Naive thymus-derived CD4-positive, alpha-beta T cell (primary cell): ENCODE measurements at regions of chr1 and their contacts with region 1.

Region 1: GRCh38 chr1:168360151-168361021 is 79.7 kb downstream of the TBX19 start:
- DNase-seq: peak in 1 of 9 donors; percentile 51
- ATAC-seq: no peak
- H3K4me3 ChIP-seq: no peak overlapping the region
- H3K4me3 Mint-ChIP-seq: peak overlapping the region in 1 of 10 donors; percentile 49
- H3K27ac ChIP-seq: no peak overlapping the region
- H3K27ac Mint-ChIP-seq: peak overlapping the region in 2 of 9 donors; percentile 35 to 70
- H3K4me1 ChIP-seq: peaks cover 4 to 37% of the 10 kb centered on the region in 2 donors
- H3K4me1 Mint-ChIP-seq: peaks cover 8 to 45% (median 10%) of the 10 kb centered on the region in 7 donors
- H3K27me3 ChIP-seq: no peaks in the 10 kb centered on the region
- H3K27me3 Mint-ChIP-seq: peaks cover 0 to 12% (median 5%) of the 10 kb centered on the region in 5 donors

Region 2: GRCh38 chr1:168396940-168397698 is 36.7 kb after region 1 on chr1:
- CTCF ChIA-PET with region 1: no interaction called
- POLR2A ChIA-PET with region 1: no interaction called
- intact Hi-C with region 1: no loop called
- DNase-seq: no peak
- ATAC-seq: no peak
- H3K4me3 ChIP-seq: no peak overlapping the region
- H3K4me3 Mint-ChIP-seq: no peak overlapping the region
- H3K27ac ChIP-seq: no peak overlapping the region
- H3K27ac Mint-ChIP-seq: no peak overlapping the region
- H3K4me1 ChIP-seq: peaks cover 0 to 11% of the 10 kb centered on the region in 2 donors
- H3K4me1 Mint-ChIP-seq: peaks cover 0 to 28% (median 0%) of the 10 kb centered on the region in 7 donors
- H3K27me3 ChIP-seq: no peaks in the 10 kb centered on the region
- H3K27me3 Mint-ChIP-seq: peaks cover 5 to 32% (median 10%) of the 10 kb centered on the region in 5 donors

Region 3: DNA sequence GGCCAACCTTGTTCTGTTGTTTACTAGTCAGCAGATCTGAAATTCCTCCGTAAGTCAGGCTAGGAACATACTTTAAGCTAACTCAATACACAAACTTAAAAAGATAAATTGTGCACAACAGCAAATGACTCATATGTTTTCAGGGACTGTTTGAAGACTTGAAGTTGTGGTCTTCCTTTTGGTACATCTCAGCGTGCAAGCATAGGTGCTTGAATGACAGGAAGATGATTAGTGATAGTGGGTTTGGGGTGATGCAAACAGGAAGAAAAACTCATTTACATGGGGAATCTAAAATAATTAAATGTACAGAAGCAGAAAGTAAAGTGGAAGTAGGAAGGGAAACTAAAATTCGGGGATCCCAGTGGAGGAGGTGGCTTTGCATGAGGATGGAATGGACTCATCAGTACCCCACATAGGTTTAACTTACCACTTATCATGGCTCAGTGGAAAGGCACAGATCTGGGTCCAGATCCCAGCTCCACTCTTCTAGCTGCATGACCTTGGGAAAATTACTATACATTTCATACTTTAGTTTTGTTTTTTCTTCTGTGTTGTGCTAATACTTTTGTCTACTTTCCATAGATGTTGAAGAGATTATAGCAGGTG is 61.1 kb after region 1 on chr1:
- CTCF ChIA-PET with region 1: no interaction called
- POLR2A ChIA-PET with region 1: no interaction called
- intact Hi-C with region 1: loop called in 1 of 2 experiments (anchors 5 kb)
- DNase-seq: no peak
- ATAC-seq: peak; percentile 81
- H3K4me3 ChIP-seq: no peak overlapping the region
- H3K4me3 Mint-ChIP-seq: peak overlapping the region in 2 of 10 donors; percentile 48 to 54
- H3K27ac ChIP-seq: no peak overlapping the region
- H3K27ac Mint-ChIP-seq: peak overlapping the region in 5 of 9 donors; percentile 14 to 75 (median 23)
- H3K4me1 ChIP-seq: peaks cover 0 to 38% of the 10 kb centered on the region in 2 donors
- H3K4me1 Mint-ChIP-seq: peaks cover 5 to 24% (median 7%) of the 10 kb centered on the region in 7 donors
- H3K27me3 ChIP-seq: no peaks in the 10 kb centered on the region
- H3K27me3 Mint-ChIP-seq: no peaks in the 10 kb centered on the region

Region 4: GRCh38 chr1:168433238-168433637 is 72.9 kb after region 1 on chr1:
- CTCF ChIA-PET with region 1: no interaction called
- POLR2A ChIA-PET with region 1: no interaction called
- intact Hi-C with region 1: no loop called
- DNase-seq: no peak
- ATAC-seq: no peak
- H3K4me3 ChIP-seq: no peak overlapping the region
- H3K4me3 Mint-ChIP-seq: no peak overlapping the region
- H3K27ac ChIP-seq: no peak overlapping the region
- H3K27ac Mint-ChIP-seq: no peak overlapping the region
- H3K4me1 ChIP-seq: no peaks in the 10 kb centered on the region
- H3K4me1 Mint-ChIP-seq: peaks cover 0 to 9% (median 0%) of the 10 kb centered on the region in 7 donors
- H3K27me3 ChIP-seq: no peaks in the 10 kb centered on the region
- H3K27me3 Mint-ChIP-seq: peaks cover 0 to 13% (median 0%) of the 10 kb centered on the region in 5 donors